Pancreas (tissue), 10 donors: ENCODE measurements at regions of chr10 and their contacts with region 1.

Region 1: GRCh38 chr10:77391605-77392235 is 245.9 kb downstream of the KCNMA1 start:
- DNase-seq: peak; percentile 73 to 91 (median 78)
- ATAC-seq: peak; percentile 71 to 80 (median 74)
- H3K4me3 ChIP-seq: no peak overlapping the region
- H3K27ac ChIP-seq: peak overlapping the region in 1 of 4 donors; percentile 66
- H3K4me1 ChIP-seq: peaks cover 16 to 34% (median 23%) of the 10 kb centered on the region in 3 donors
- H3K27me3 ChIP-seq: no peaks in the 10 kb centered on the region
- CTCF ChIP-seq: peak in 3 of 4 donors; percentile 29 to 35 (median 34)

Region 2: DNA sequence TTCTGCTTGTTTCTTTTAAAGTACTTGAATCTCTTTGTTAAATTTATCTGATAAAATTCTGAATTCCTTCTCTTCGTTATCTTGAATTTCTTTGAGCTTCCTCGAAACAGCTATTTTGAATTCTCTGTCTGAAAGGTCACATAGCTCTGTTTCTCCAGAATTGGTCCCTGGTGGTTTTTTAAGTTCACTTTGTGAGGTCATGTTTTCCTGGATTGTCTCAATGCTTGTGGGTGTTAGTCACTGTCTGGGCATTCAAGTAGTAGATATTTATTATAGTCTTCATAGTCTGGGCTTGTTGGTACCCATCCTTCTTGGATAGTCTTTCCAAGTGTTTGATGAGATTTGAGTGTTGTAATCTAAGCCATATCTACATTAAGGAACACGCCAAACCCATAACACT is 899.7 kb before region 1 on chr10:
- intact Hi-C with region 1: no loop called
- DNase-seq: no peak
- ATAC-seq: peak in 2 of 4 donors; percentile 60 to 74
- H3K4me3 ChIP-seq: no peak overlapping the region
- H3K27ac ChIP-seq: peak overlapping the region in 1 of 4 donors; percentile 74
- H3K4me1 ChIP-seq: peaks cover 6 to 19% (median 12%) of the 10 kb centered on the region in 3 donors
- H3K27me3 ChIP-seq: no peaks in the 10 kb centered on the region
- CTCF ChIP-seq: no peak

Region 3: GRCh38 chr10:76902949-76903348 is 488.8 kb before region 1 on chr10:
- intact Hi-C with region 1: no loop called
- DNase-seq: no peak
- ATAC-seq: no peak
- H3K4me3 ChIP-seq: no peak overlapping the region
- H3K27ac ChIP-seq: no peak overlapping the region
- H3K4me1 ChIP-seq: no peaks in the 10 kb centered on the region
- H3K27me3 ChIP-seq: no peaks in the 10 kb centered on the region
- CTCF ChIP-seq: no peak

Region 4: GRCh38 chr10:77173615-77174461 is 217.9 kb before region 1 on chr10:
- intact Hi-C with region 1: loop called in 1 of 3 experiments (anchors 10 kb)
- DNase-seq: peak; percentile 50 to 83 (median 70)
- ATAC-seq: peak; percentile 71 to 98 (median 93)
- H3K4me3 ChIP-seq: no peak overlapping the region
- H3K27ac ChIP-seq: no peak overlapping the region
- H3K4me1 ChIP-seq: no peaks in the 10 kb centered on the region
- H3K27me3 ChIP-seq: no peaks in the 10 kb centered on the region
- CTCF ChIP-seq: peak; percentile 66 to 88 (median 82)